ENCODE measurements at regions of chr20 and their contacts with region 1.

Region 1: GRCh38 chr20:53623454-53624211 is 30.0 kb upstream of the ZNF217 start:
- DNase-seq: peak; percentile 51
- H3K4me3 Mint-ChIP-seq: peak overlapping the region; percentile 60
- H3K27ac Mint-ChIP-seq: peak overlapping the region; percentile 96
- H3K4me1 Mint-ChIP-seq: peaks cover 39% of the 10 kb centered on the region
- H3K27me3 Mint-ChIP-seq: no peaks in the 10 kb centered on the region

Region 2: DNA sequence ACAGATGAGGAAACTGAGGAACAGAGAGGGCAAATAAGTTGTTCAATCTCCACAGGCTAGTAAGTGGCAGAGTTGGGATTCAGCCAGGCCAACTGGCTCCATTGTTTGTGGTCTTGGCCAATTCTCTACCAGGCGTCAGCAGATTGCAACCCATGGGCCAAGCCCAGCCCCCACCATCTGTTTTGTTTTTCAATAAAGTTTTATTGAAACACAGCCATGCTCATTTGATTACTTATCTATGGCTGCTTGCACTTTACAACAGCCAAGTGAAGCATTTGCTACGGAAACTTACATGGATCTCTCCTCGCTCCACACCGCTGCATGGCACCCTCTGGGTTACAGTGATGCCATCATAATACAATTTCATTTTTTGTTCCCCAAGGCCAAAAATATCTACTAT is 120.8 kb before region 1 on chr20:
- CTCF ChIA-PET with region 1: no interaction called
- POLR2A ChIA-PET with region 1: no interaction called
- DNase-seq: no peak
- H3K4me3 Mint-ChIP-seq: no peak overlapping the region
- H3K27ac Mint-ChIP-seq: no peak overlapping the region
- H3K4me1 Mint-ChIP-seq: no peaks in the 10 kb centered on the region
- H3K27me3 Mint-ChIP-seq: no peaks in the 10 kb centered on the region

Region 3: GRCh38 chr20:53578492-53579222 is 45.0 kb before region 1 on chr20:
- CTCF ChIA-PET with region 1: no interaction called
- POLR2A ChIA-PET with region 1: interaction called, 34 read pairs
- DNase-seq: peak; percentile 55
- H3K4me3 Mint-ChIP-seq: peak overlapping the region; percentile 78
- H3K27ac Mint-ChIP-seq: peak overlapping the region; percentile 80
- H3K4me1 Mint-ChIP-seq: peaks cover 92% of the 10 kb centered on the region
- H3K27me3 Mint-ChIP-seq: no peaks in the 10 kb centered on the region

Region 4: GRCh38 chr20:53611449-53611894 is 12.2 kb before region 1 on chr20:
- CTCF ChIA-PET with region 1: interaction called, 26 read pairs
- POLR2A ChIA-PET with region 1: interaction called, 115 read pairs
- DNase-seq: no peak
- H3K4me3 Mint-ChIP-seq: no peak overlapping the region
- H3K27ac Mint-ChIP-seq: no peak overlapping the region
- H3K4me1 Mint-ChIP-seq: peaks cover 32% of the 10 kb centered on the region
- H3K27me3 Mint-ChIP-seq: no peaks in the 10 kb centered on the region

Region 5: DNA sequence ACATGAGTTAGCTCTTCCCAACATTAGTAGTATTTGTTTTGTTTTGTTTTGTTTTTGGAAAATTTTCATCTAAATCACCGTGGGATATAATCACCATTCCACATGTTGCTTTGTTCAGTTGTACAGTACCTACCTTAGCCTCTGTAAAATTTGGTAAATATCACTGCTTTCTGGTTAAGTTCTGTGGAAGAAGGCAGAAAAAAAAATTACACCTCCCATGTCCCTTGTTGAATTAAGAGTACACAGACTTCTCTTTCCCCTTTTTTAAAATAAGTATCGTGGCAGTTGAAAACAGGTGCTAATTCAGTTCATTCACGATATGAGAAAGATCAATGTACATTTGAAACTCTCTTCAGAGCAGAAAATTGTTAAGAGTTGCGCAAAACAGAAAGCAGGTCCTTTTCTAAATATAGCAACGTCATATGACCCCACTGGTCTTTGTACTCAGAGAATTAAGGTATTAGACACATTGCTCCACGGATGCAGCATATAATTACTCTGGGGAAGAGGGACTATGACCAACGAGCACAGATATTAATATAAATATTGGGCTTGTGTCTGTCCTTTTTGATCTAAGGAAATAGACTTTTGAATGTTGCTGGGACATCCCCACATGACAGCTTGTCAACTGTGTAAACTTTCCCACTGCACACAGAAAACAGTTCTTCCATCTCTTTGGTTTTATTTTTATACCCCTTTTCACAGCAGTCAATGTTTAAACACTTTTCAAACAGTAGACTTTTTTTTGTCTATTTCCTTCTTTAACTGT is 28.6 kb after region 1 on chr20:
- CTCF ChIA-PET with region 1: interaction called, 3 read pairs
- POLR2A ChIA-PET with region 1: interaction called, 11 read pairs
- DNase-seq: no peak
- H3K4me3 Mint-ChIP-seq: peak overlapping the region; percentile 69
- H3K27ac Mint-ChIP-seq: peak overlapping the region; percentile 97
- H3K4me1 Mint-ChIP-seq: peaks cover 40% of the 10 kb centered on the region
- H3K27me3 Mint-ChIP-seq: no peaks in the 10 kb centered on the region

Region 6: GRCh38 chr20:53750827-53751619 is 127.4 kb after region 1 on chr20:
- CTCF ChIA-PET with region 1: no interaction called
- POLR2A ChIA-PET with region 1: interaction called, 14 read pairs
- DNase-seq: peak; percentile 56
- H3K4me3 Mint-ChIP-seq: peak overlapping the region; percentile 16
- H3K27ac Mint-ChIP-seq: peak overlapping the region; percentile 96
- H3K4me1 Mint-ChIP-seq: peaks cover 69% of the 10 kb centered on the region
- H3K27me3 Mint-ChIP-seq: no peaks in the 10 kb centered on the region

Region 7: DNA sequence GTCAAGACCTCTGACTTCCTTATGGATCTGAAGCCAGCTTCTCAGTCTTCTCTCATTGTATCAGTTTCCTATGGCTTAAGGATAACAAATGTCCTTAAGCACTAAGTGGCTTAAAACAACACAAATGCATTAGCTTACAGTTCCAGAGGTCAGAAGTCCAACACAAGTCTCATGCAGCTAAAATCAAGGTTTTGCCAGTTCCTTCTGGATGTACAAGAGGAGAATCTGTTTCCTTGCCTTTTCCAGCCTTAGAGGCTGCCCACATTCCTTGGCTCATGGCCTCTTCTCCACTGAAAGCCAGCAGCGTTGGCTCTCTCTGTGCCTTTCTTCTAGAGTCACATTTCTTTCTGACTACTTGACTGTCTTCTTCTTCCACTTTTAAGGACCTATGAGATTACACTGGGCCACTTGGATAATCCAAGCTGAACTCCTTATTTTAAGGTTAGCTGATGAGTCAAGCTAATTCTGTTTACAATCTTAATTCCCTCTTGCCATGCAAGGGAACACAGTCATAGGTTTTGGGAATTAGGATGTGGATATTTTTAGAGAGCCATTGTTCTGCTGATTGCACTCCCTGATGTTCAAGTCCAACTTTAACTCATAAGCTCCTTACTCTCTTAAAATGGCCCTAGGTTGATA is 267.8 kb after region 1 on chr20:
- CTCF ChIA-PET with region 1: no interaction called
- POLR2A ChIA-PET with region 1: no interaction called
- DNase-seq: no peak
- H3K4me3 Mint-ChIP-seq: no peak overlapping the region
- H3K27ac Mint-ChIP-seq: no peak overlapping the region
- H3K4me1 Mint-ChIP-seq: peaks cover 36% of the 10 kb centered on the region
- H3K27me3 Mint-ChIP-seq: no peaks in the 10 kb centered on the region

Measured in activated CD4-positive, alpha-beta memory T cell treated with anti-CD3 and anti-CD28 coated beads, Interleukin-2, amount 10 ng/mL, durations not matched to agents 7 days and 5 days (primary cell).